HepG2 (cell line): ENCODE measurements at regions of chr6 and their contacts with region 1.

Region 1: DNA sequence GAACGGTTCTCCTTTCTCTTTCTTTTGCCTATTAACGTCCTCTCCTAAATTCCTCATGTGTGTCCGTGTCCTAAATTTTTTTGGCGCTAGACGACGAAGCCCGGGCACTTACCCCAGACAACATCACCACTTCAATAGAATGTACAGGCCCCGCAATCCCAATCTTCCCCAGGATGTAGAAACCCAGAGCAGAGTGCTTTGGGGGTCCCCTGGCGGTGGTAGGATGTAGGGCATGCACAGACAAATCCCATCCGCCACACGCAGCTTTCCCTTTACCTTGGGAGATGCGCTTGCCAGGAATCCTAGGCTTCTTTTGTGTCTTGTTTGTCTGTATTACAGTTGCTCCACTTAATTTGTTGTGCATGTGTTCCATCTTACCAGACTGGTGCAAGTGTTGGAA is 417.3 kb upstream of the ARID1B start:
- DNase-seq: peak; percentile 19
- ATAC-seq: peak; percentile 98
- H3K4me3 ChIP-seq: no peak overlapping the region
- H3K27ac ChIP-seq: no peak overlapping the region
- H3K4me1 ChIP-seq: no peaks in the 10 kb centered on the region
- H3K27me3 ChIP-seq: peaks cover 0 to 3% of the 10 kb centered on the region in 2 experiments; a peak in 3 of 5 replicates
- CTCF ChIP-seq: peak; percentile 78
- EP300 ChIP-seq: no peak
- POLR2A ChIP-seq: no peak
- RAD21 ChIP-seq: peak; percentile 43; the same call in 1 of the 2 replicates

Region 2: GRCh38 chr6:156175971-156176421 is 183.9 kb before region 1 on chr6:
- CTCF ChIA-PET with region 1: no interaction called
- POLR2A ChIA-PET with region 1: no interaction called
- in situ Hi-C with region 1: no loop called
- intact Hi-C with region 1: loop called (anchors 5 kb)
- DNase-seq: peak; percentile 8
- ATAC-seq: peak; percentile 82
- H3K4me3 ChIP-seq: no peak overlapping the region
- H3K27ac ChIP-seq: no peak overlapping the region
- H3K4me1 ChIP-seq: no peaks in the 10 kb centered on the region
- H3K27me3 ChIP-seq: no peaks in the 10 kb centered on the region
- CTCF ChIP-seq: peak; percentile 40
- EP300 ChIP-seq: no peak
- POLR2A ChIP-seq: no peak
- RAD21 ChIP-seq: no peak